ENCODE measurements at regions of chr3 and their contacts with region 1.

Region 1: DNA sequence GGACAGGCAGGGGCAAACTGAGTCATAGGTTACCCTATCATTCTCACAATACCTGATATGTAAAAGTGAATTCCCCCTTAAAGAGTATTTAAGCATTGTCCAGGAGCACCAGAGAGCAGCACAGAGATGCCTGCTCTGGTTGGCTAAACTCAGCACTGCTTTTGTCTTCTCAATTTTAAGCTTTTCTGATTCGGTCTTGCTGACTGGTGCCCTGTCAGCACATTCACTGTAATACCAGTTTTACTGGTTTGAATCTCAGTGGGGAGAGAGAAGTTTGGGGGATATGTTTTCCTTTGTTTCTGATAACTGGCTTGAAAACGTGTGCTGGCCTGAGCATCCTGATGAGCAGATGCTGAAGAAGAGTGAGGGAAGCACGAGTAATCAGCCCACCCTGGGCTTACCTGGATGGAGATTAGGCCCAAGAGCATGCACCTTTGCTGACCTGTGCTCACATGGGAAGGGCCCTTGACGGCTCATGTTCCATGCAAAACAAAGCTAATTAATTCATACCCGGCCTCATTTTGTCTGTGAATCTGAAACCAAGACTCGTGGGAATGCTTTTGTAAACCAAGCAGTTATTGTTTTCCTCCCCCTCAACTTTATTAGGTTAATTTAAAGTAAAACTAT is 208.5 kb upstream of the MRPL3 start:
- DNase-seq: no peak
- H3K4me3 ChIP-seq: no peak overlapping the region
- H3K27me3 ChIP-seq: no peaks in the 10 kb centered on the region
- CTCF ChIP-seq: no peak

Region 2: DNA sequence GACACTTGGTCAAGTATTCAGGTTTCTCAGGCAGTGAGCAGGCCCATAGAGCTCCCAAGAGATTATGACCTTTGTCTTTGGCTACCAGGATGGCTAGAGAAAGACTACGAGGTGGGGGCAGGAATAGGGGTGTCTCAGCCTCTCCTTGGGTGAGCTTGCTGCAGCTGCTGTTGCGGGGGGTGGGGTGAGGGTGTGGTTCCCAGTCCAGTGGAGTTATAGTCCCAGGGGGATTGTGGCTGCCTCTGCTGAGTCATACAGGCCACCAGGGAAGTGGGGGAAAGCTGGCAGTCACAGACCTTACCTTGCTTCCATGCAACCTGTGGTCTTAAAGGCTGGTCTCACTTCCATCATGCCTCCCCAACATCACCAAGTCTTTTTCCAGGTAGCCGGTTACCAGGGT is 785.6 kb before region 1 on chr3:
- CTCF ChIA-PET with region 1: no interaction called
- POLR2A ChIA-PET with region 1: no interaction called
- DNase-seq: no peak
- H3K4me3 ChIP-seq: no peak overlapping the region
- H3K27me3 ChIP-seq: no peaks in the 10 kb centered on the region
- CTCF ChIP-seq: no peak

Region 3: GRCh38 chr3:131723343-131723742 is 12.1 kb after region 1 on chr3:
- CTCF ChIA-PET with region 1: interaction called, 10 read pairs
- POLR2A ChIA-PET with region 1: no interaction called
- DNase-seq: no peak
- H3K4me3 ChIP-seq: no peak overlapping the region
- H3K27me3 ChIP-seq: no peaks in the 10 kb centered on the region; the same call in 1 of the 2 replicates
- CTCF ChIP-seq: no peak

Region 4: GRCh38 chr3:132189601-132190000 is 478.3 kb after region 1 on chr3:
- CTCF ChIA-PET with region 1: no interaction called
- POLR2A ChIA-PET with region 1: no interaction called
- DNase-seq: no peak
- H3K4me3 ChIP-seq: no peak overlapping the region
- H3K27me3 ChIP-seq: 0 out of 2 replicates have a peak, but pooled peaks cover 1% of the 10 kb centered on the region
- CTCF ChIP-seq: no peak